MCF 10A (cell line): ENCODE measurements at regions of chr14 and their contacts with region 1.

Region 1: GRCh38 chr14:66359500-66359899 is 126.7 kb upstream of the CCDC196 start:
- DNase-seq: peak; percentile 65
- H3K4me3 Mint-ChIP-seq: no peak overlapping the region
- H3K27ac Mint-ChIP-seq: no peak overlapping the region
- H3K4me1 Mint-ChIP-seq: no peaks in the 10 kb centered on the region
- H3K27me3 Mint-ChIP-seq: no peaks in the 10 kb centered on the region
- CTCF ChIP-seq: peak; percentile 62

Region 2: GRCh38 chr14:66121855-66122254 is 237.6 kb before region 1 on chr14:
- CTCF ChIA-PET with region 1: no interaction called
- POLR2A ChIA-PET with region 1: no interaction called
- intact Hi-C with region 1: no loop called
- DNase-seq: no peak
- H3K4me3 Mint-ChIP-seq: no peak overlapping the region
- H3K27ac Mint-ChIP-seq: no peak overlapping the region
- H3K4me1 Mint-ChIP-seq: peaks cover 11% of the 10 kb centered on the region
- H3K27me3 Mint-ChIP-seq: no peaks in the 10 kb centered on the region
- CTCF ChIP-seq: no peak

Region 3: GRCh38 chr14:66378712-66379505 is 19.4 kb after region 1 on chr14:
- CTCF ChIA-PET with region 1: interaction called, 12 read pairs
- POLR2A ChIA-PET with region 1: no interaction called
- intact Hi-C with region 1: no loop called
- DNase-seq: peak; percentile 40
- H3K4me3 Mint-ChIP-seq: no peak overlapping the region
- H3K27ac Mint-ChIP-seq: no peak overlapping the region
- H3K4me1 Mint-ChIP-seq: no peaks in the 10 kb centered on the region
- H3K27me3 Mint-ChIP-seq: no peaks in the 10 kb centered on the region
- CTCF ChIP-seq: no peak

Region 4: DNA sequence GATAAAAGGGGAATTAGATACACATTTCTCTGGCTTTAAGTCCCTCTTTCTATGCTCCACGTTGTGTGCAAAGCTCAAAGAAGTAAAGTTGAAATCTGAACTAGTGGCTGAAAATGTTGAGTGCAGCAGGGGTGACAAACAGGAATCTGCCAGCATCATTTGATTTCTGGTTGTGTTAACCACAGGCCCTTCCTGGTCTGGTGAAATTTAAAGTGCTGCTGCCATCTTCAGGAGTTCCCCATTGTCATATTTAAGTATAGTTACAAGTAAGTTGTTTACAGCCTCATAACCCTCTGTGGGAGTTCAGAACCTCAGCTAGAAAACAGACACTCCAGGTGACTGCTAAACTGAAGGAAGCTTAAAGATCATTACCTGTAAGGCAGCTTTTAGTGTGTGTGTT is 35.8 kb after region 1 on chr14:
- CTCF ChIA-PET with region 1: interaction called, 103 read pairs
- POLR2A ChIA-PET with region 1: no interaction called
- intact Hi-C with region 1: no loop called
- DNase-seq: peak; percentile 5
- H3K4me3 Mint-ChIP-seq: no peak overlapping the region
- H3K27ac Mint-ChIP-seq: no peak overlapping the region
- H3K4me1 Mint-ChIP-seq: no peaks in the 10 kb centered on the region
- H3K27me3 Mint-ChIP-seq: no peaks in the 10 kb centered on the region
- CTCF ChIP-seq: no peak

Region 5: GRCh38 chr14:66495218-66496098 is 136.0 kb after region 1 on chr14:
- CTCF ChIA-PET with region 1: interaction called, 19 read pairs
- POLR2A ChIA-PET with region 1: no interaction called
- intact Hi-C with region 1: no loop called
- DNase-seq: peak; percentile 69
- H3K4me3 Mint-ChIP-seq: no peak overlapping the region
- H3K27ac Mint-ChIP-seq: no peak overlapping the region
- H3K4me1 Mint-ChIP-seq: no peaks in the 10 kb centered on the region
- H3K27me3 Mint-ChIP-seq: no peaks in the 10 kb centered on the region
- CTCF ChIP-seq: peak; percentile 58